IMR-90 (cell line): ENCODE measurements at regions of chr10 and their contacts with region 1.

Region 1: GRCh38 chr10:14588084-14588937 is 186.4 kb downstream of the FAM107B start:
- DNase-seq: peak; percentile 100
- ATAC-seq: peak; percentile 83
- H3K4me3 ChIP-seq: peak overlapping the region; percentile 1; the same call in 1 of the 2 replicates
- H3K27ac ChIP-seq: peak overlapping the region; percentile 99
- H3K4me1 ChIP-seq: peaks cover 30% of the 10 kb centered on the region
- H3K27me3 ChIP-seq: no peaks in the 10 kb centered on the region
- CTCF ChIP-seq: no peak
- POLR2A ChIP-seq: peak; percentile 50
- RAD21 ChIP-seq: peak; percentile 22

Region 2: GRCh38 chr10:14532473-14533251 is 55.6 kb before region 1 on chr10:
- CTCF ChIA-PET with region 1: no interaction called
- POLR2A ChIA-PET with region 1: no interaction called
- dilution Hi-C with region 1: no loop called
- in situ Hi-C with region 1: no loop called
- intact Hi-C with region 1: no loop called
- DNase-seq: peak; percentile 65
- ATAC-seq: peak; percentile 69
- H3K4me3 ChIP-seq: no peak overlapping the region
- H3K27ac ChIP-seq: peak overlapping the region; percentile 78
- H3K4me1 ChIP-seq: peaks cover 39% of the 10 kb centered on the region
- H3K27me3 ChIP-seq: no peaks in the 10 kb centered on the region
- CTCF ChIP-seq: no peak
- POLR2A ChIP-seq: no peak
- RAD21 ChIP-seq: no peak

Region 3: DNA sequence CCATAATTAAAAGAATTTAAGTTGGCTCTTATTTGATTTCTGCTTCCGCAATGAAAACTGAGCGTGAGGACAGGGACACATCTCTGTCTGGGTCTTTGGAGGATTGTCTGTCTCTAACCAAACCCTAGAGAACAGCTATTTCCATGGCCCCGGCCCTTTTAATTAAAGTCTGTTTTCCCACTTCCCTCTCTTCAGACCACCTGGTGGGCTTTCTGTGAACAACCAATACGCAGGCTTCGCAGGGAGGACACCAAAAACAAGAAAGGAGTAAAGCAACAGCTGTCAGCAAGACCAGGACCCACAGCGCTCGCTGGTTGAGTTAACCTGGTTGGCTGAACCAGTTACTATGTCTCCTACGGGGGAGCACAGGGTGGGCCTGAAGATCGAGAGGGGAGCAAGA is 40.5 kb before region 1 on chr10:
- CTCF ChIA-PET with region 1: no interaction called
- POLR2A ChIA-PET with region 1: no interaction called
- dilution Hi-C with region 1: no loop called
- in situ Hi-C with region 1: no loop called
- intact Hi-C with region 1: loop called (anchors 5 kb)
- DNase-seq: no peak
- ATAC-seq: no peak
- H3K4me3 ChIP-seq: no peak overlapping the region
- H3K27ac ChIP-seq: no peak overlapping the region
- H3K4me1 ChIP-seq: peaks cover 24% of the 10 kb centered on the region
- H3K27me3 ChIP-seq: no peaks in the 10 kb centered on the region
- CTCF ChIP-seq: no peak
- POLR2A ChIP-seq: no peak
- RAD21 ChIP-seq: no peak

Region 4: DNA sequence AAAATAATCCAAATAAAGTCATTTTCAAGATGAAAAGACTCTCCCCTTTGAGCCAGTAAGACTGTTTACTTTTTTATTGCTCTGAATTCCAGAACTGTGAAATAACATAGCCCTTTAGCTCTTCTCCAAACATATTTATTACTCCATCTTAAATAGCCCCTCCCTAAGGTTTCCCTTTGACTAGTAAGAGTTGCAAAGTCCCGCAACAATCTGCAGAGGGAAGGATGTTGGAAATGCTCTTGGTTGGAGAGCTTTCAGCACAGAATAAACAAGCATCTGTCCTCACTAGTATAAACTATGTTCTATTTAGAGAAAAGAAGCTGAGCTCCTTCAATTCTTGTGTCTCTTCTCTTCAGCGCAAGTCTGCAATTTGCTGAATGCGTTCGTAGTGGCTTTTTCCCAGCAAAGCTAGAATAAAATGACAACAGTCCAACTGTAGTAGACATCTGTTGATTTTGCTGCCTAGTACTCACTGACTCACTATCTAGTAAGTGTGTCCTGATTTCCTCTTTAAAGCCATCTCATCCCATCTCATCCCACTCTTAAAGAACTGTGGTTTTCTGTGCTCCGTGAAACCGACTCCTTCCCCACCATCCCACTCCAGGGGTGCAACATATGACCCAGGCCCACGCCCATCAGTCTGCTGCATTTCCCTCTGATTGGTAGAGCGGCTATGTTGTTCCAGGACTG is 82.4 kb after region 1 on chr10:
- CTCF ChIA-PET with region 1: no interaction called
- POLR2A ChIA-PET with region 1: no interaction called
- dilution Hi-C with region 1: no loop called
- in situ Hi-C with region 1: no loop called
- intact Hi-C with region 1: no loop called
- DNase-seq: peak; percentile 82
- ATAC-seq: peak; percentile 95
- H3K4me3 ChIP-seq: no peak overlapping the region; the same call in 1 of the 2 replicates
- H3K27ac ChIP-seq: peak overlapping the region; percentile 84
- H3K4me1 ChIP-seq: peaks cover 7% of the 10 kb centered on the region
- H3K27me3 ChIP-seq: no peaks in the 10 kb centered on the region
- CTCF ChIP-seq: no peak
- POLR2A ChIP-seq: no peak
- RAD21 ChIP-seq: no peak

Region 5: DNA sequence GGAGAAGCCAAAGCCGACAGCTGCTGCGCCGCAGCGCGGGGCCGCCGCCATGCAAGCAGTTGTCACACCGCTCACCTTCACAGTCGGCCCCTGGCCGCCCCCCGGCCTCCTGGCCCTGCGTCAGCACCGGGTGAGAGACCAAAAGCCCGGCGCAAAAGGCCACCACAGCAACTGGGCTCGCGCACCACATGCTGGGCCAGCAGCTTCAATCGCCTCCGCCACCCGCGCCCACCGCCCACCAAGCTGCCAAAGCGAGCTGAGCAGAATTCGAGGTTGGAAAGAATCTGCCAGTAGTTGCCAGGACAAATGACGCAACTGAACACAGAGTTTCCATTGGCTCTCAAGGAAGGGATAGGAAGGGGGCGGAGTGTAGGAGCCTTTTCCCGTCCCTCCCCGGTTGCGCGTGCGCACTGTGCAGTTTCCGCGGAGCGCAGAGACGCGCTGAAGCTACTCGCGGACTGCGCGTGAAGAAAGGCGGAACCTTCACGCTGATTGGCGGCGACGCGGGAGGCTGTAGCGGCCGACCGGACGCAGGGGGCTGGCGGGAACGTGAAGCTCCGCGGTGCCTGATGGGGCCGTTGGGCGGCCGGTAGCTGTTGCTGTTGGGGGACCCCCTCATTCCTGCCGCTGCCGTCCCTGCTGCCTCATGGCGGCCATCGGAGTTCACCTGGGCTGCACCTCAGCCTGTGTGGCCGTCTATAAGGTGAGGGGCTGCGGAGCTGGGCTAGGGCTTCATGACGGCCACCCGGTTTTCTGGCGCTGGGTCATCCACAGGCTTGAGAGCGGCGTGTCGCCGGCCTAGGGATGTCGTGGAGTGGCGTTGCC is 249.7 kb after region 1 on chr10 and contains the starts of genes CDNF, HSPA14 and MSANTD7:
- CTCF ChIA-PET with region 1: no interaction called
- POLR2A ChIA-PET with region 1: no interaction called
- dilution Hi-C with region 1: no loop called
- in situ Hi-C with region 1: no loop called
- intact Hi-C with region 1: loop called (anchors 1 kb)
- DNase-seq: peak; percentile 99
- ATAC-seq: peak; percentile 97
- H3K4me3 ChIP-seq: peak within 1 kb of the TSS; percentile 74
- H3K27ac ChIP-seq: peak within 1 kb of the TSS; percentile 82
- H3K4me1 ChIP-seq: peaks cover 1% of the 10 kb centered on the region; the same call in 1 of the 2 replicates
- H3K27me3 ChIP-seq: no peaks in the 10 kb centered on the region
- CTCF ChIP-seq: no peak
- POLR2A ChIP-seq: peak; percentile 91
- RAD21 ChIP-seq: 0 out of 2 replicates have a peak, but pooled peaks have one; percentile 8
- total RNA-seq, gene CDNF: 0.72 and 0.83 TPM in 2 replicates
- total RNA-seq, gene HSPA14: 11.8 and 15.6 TPM in 2 replicates
- total RNA-seq, gene MSANTD7: 16.0 and 17.2 TPM in 2 replicates